ENCODE measurements at regions of chr20 and their contacts with region 1.

Region 1: DNA sequence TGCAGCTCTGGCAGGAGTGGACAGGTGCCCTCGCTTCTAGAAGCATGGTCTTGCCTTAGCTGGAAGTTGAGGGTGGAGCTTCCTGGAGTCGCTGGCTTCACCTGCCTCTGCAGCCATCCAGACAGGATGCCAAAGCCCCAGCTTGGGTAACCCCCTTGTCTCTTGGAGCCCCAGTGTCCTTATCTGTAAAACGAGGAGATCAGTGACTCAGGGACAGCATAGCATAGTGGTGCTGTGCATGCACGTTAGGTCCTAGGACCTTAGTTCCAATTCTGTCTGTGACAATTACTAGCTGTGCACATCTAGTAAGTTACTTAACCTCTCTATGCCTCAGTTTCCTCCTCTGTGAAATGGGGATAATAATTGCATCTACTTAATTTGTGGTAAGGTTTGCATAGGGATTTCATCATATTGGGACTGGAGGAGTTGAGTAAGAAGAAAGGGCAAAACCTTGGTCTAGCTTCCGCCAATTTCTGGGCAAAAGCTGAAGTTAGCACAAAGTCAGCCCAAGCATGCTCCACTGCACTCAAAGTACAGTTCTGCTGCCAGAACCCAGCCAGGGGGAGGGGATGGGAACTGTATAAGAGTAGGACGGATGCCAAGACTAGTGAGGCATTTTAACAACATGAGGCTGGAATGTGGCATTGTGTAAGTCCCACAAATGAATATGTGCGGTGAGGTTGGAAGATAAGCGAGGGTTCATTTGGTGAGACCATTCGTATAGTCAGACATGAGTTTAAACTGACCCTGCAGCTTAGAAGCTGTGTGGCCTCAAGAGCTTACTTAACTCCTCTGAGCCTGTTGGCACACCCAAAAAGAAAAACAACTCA is 24.5 kb downstream of the TOX2 start:
- DNase-seq: peak; percentile 96
- H3K4me3 ChIP-seq: no peak overlapping the region
- H3K27ac ChIP-seq: peak overlapping the region; percentile 11
- H3K4me1 ChIP-seq: peaks cover 65% of the 10 kb centered on the region
- H3K27me3 ChIP-seq: no peaks in the 10 kb centered on the region
- CTCF ChIP-seq: no peak

Region 2: GRCh38 chr20:43955062-43955749 is 16.1 kb after region 1 on chr20:
- CTCF ChIA-PET with region 1: interaction called, 24 read pairs
- dilution Hi-C with region 1: no loop called
- in situ Hi-C with region 1: no loop called
- intact Hi-C with region 1: loop called (anchors 1 kb)
- DNase-seq: peak; percentile 89
- H3K4me3 ChIP-seq: no peak overlapping the region
- H3K27ac ChIP-seq: peak overlapping the region; percentile 40
- H3K4me1 ChIP-seq: peaks cover 36% of the 10 kb centered on the region
- H3K27me3 ChIP-seq: no peaks in the 10 kb centered on the region
- CTCF ChIP-seq: no peak